HepG2 (cell line): ENCODE measurements at regions of chrX and their contacts with region 1.

Region 1: GRCh38 chrX:104195489-104196084 is 29.3 kb downstream of the FAM199X start:
- DNase-seq: peak; percentile 3
- ATAC-seq: no peak
- H3K4me3 ChIP-seq: no peak overlapping the region
- H3K27ac ChIP-seq: no peak overlapping the region
- H3K4me1 ChIP-seq: no peaks in the 10 kb centered on the region
- H3K27me3 ChIP-seq: no peaks in the 10 kb centered on the region
- CTCF ChIP-seq: peak; percentile 40
- EP300 ChIP-seq: no peak
- POLR2A ChIP-seq: no peak
- RAD21 ChIP-seq: no peak

Region 2: DNA sequence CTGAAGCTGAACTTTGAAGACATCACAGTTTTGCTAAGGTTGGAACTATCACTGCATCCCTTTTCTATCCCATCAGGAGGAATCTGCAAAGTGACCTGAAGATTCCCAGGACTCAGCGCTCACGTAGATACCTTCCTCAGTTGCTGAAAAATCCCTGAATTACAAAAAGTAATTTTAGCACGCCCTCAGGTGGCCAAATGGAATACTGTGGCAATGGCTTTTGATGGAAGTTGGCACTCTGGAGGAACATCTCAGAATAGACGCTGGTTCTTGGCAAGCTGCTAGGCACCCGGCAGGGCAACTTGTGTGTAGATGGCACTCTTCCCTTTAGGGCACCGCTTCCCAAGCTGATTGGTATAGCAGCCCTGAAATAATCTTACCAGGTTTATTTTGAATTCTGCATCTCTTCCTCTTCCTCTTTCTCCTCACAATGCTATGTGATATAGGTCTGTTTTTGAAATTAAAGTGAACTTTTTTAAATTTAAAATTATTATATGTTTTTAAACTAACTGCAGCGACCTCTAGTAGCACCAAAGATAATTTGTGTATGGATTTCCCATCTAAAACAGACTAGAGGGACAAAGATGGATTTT is 75.4 kb after region 1 on chrX:
- CTCF ChIA-PET with region 1: interaction called, 7 read pairs
- POLR2A ChIA-PET with region 1: no interaction called
- in situ Hi-C with region 1: no loop called
- intact Hi-C with region 1: loop called (anchors 1 kb)
- DNase-seq: peak; percentile 1
- ATAC-seq: peak; percentile 38; the same call in 1 of the 3 replicates
- H3K4me3 ChIP-seq: no peak overlapping the region
- H3K27ac ChIP-seq: no peak overlapping the region
- H3K4me1 ChIP-seq: no peaks in the 10 kb centered on the region
- H3K27me3 ChIP-seq: no peaks in the 10 kb centered on the region
- CTCF ChIP-seq: peak; percentile 70
- EP300 ChIP-seq: no peak
- POLR2A ChIP-seq: no peak
- RAD21 ChIP-seq: no peak

Region 3: DNA sequence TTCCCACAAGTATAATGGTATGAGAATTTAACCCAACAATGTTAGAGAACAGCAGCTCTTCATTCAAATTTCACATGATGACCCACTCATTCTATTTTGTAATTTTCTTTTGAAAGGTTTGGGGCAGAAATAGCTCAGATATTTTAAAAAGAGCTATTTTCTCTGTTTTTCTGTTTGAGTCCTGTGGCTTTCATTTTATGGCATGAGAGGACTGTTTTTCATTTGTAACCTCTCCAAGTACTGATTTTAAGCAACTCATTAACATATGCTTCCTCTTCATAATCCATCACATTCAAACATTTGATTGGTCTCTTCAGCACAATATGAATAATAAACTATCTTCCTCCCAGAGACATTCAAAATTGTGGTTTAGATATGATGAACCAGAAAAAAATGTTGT is 1153.9 kb after region 1 on chrX:
- CTCF ChIA-PET with region 1: no interaction called
- POLR2A ChIA-PET with region 1: no interaction called
- in situ Hi-C with region 1: no loop called
- intact Hi-C with region 1: no loop called
- DNase-seq: no peak
- ATAC-seq: no peak
- H3K4me3 ChIP-seq: no peak overlapping the region
- H3K27ac ChIP-seq: no peak overlapping the region
- H3K4me1 ChIP-seq: no peaks in the 10 kb centered on the region
- H3K27me3 ChIP-seq: no peaks in the 10 kb centered on the region
- CTCF ChIP-seq: no peak
- EP300 ChIP-seq: no peak
- POLR2A ChIP-seq: no peak
- RAD21 ChIP-seq: no peak